Left ventricle myocardium inferior (tissue), 1 donor: ENCODE measurements at regions of chr3 and their contacts with region 1.

Region 1: GRCh38 chr3:187738331-187739093 is 6.8 kb downstream of the BCL6 start:
- DNase-seq: peak; percentile 88
- H3K4me3 ChIP-seq: peak overlapping the region; percentile 88
- H3K27ac ChIP-seq: peak overlapping the region; percentile 99
- H3K4me1 ChIP-seq: peaks cover 85% of the 10 kb centered on the region
- H3K27me3 ChIP-seq: no peaks in the 10 kb centered on the region
- CTCF ChIP-seq: peak; percentile 76

Region 2: DNA sequence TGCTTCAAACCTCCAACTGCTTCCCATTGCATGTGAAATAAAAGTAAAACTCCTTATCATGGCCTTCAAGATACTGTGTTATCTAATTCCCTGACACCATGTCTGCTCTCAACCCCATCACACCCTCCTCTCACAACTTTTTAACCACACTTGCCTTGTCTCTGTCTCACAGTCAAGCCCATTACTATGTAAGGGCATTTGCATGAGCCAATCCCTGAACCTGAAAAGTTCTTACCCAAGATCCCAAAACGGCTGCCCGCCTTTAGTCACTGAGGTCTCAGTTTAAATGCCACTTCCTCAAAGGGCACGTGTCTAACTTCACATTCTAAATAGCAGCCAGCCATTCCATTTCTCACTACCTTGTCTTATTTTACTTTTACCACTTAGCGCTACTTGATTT is 151.4 kb before region 1 on chr3:
- intact Hi-C with region 1: no loop called
- DNase-seq: no peak
- H3K4me3 ChIP-seq: no peak overlapping the region
- H3K27ac ChIP-seq: no peak overlapping the region
- H3K4me1 ChIP-seq: no peaks in the 10 kb centered on the region
- H3K27me3 ChIP-seq: peaks cover 16% of the 10 kb centered on the region
- CTCF ChIP-seq: no peak

Region 3: DNA sequence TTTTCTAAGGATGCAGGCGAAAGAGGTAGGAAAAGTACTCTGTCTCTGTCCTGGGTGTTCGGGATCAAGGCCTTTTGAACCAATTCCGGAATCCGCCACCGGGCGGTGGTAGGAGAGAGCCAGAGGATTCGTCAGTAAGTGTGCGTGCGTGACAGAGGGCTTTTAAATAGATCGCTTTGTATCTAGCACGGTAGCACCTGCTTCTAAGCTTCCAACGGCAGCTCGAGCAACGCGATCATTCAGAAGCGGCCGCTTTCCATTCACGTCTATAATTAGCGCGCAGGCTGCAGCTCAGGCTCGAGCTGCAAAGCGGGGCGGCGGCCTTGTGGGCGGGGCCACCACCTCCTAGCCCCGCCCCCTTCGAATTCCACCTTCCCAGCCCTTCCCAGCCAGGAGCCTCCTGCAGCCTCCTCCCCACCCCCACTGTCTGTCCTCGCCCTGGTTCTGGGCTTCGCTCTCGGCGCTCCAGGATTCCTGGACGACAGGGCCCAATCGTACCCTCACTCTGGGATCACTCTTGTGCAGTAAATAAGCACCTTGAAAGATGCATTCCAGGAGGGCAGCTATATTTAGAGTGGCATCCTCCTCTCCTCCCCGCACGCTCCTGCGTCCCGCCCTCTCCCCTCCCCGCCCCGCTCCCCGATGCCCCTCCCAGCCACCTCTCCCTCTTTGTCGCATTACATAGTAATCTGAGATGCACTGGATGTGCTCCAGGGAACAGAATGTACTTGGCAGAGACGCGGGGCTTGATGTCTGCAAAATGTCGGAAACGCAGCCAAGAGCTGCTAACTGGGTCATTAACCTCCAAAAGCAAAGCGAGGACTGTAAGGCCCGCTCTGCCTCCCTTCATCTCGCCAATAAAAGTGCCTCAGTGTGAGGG is 1209.1 kb after region 1 on chr3:
- intact Hi-C with region 1: loop called (anchors 2 kb)
- DNase-seq: peak; percentile 92
- H3K4me3 ChIP-seq: peak overlapping the region; percentile 65
- H3K27ac ChIP-seq: peak overlapping the region; percentile 95
- H3K4me1 ChIP-seq: peaks cover 66% of the 10 kb centered on the region
- H3K27me3 ChIP-seq: no peaks in the 10 kb centered on the region
- CTCF ChIP-seq: peak; percentile 59

Region 4: DNA sequence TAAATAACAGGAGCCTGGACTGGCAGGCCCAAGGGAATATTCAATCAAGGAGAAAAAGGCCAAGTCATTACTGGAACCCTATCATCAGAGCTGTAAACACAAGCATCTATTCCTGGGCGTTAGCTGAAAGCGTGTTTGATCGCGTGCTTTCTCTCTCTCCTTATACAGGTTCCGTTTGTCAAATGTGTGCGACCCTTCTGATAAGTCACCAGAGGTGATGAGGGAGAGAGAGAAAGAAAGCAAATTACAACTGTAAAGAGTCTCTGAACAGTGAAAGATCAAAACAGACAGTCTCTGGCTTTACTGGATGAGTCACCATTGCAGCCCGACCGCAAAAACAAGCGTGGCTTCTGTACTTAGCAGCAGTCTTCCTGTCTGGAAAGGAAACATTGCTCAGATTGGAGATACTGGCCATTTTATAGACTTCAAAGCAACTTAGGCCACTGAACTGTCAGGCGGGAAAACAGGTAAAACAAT is 1393.8 kb after region 1 on chr3:
- intact Hi-C with region 1: loop called (anchors 10 kb)
- DNase-seq: peak; percentile 29
- H3K4me3 ChIP-seq: no peak overlapping the region
- H3K27ac ChIP-seq: peak overlapping the region; percentile 39
- H3K4me1 ChIP-seq: peaks cover 9% of the 10 kb centered on the region
- H3K27me3 ChIP-seq: no peaks in the 10 kb centered on the region
- CTCF ChIP-seq: no peak